MCF 10A (cell line): ENCODE measurements at regions of chr6 and their contacts with region 1.

Region 1: GRCh38 chr6:157034436-157035230 is 257.5 kb downstream of the ARID1B start:
- DNase-seq: peak; percentile 69
- H3K4me3 Mint-ChIP-seq: peak overlapping the region; percentile 72
- H3K27ac Mint-ChIP-seq: no peak overlapping the region
- H3K4me1 Mint-ChIP-seq: peaks cover 23% of the 10 kb centered on the region
- H3K27me3 Mint-ChIP-seq: no peaks in the 10 kb centered on the region
- CTCF ChIP-seq: peak; percentile 42

Region 2: GRCh38 chr6:156781861-156782631 is 252.6 kb before region 1 on chr6:
- CTCF ChIA-PET with region 1: interaction called, 3 read pairs
- POLR2A ChIA-PET with region 1: interaction called, 20 read pairs
- intact Hi-C with region 1: no loop called
- DNase-seq: peak; percentile 16
- H3K4me3 Mint-ChIP-seq: peak overlapping the region; percentile 79
- H3K27ac Mint-ChIP-seq: peak overlapping the region; percentile 97
- H3K4me1 Mint-ChIP-seq: peaks cover 13% of the 10 kb centered on the region
- H3K27me3 Mint-ChIP-seq: no peaks in the 10 kb centered on the region
- CTCF ChIP-seq: no peak

Region 3: GRCh38 chr6:157045831-157046454 is 11.3 kb after region 1 on chr6:
- CTCF ChIA-PET with region 1: interaction called, 41 read pairs
- POLR2A ChIA-PET with region 1: interaction called, 39 read pairs
- intact Hi-C with region 1: no loop called
- DNase-seq: peak; percentile 63
- H3K4me3 Mint-ChIP-seq: no peak overlapping the region
- H3K27ac Mint-ChIP-seq: peak overlapping the region; percentile 35
- H3K4me1 Mint-ChIP-seq: peaks cover 10% of the 10 kb centered on the region
- H3K27me3 Mint-ChIP-seq: no peaks in the 10 kb centered on the region
- CTCF ChIP-seq: peak; percentile 60

Region 4: GRCh38 chr6:157184202-157185020 is 149.8 kb after region 1 on chr6:
- CTCF ChIA-PET with region 1: interaction called, 4 read pairs
- POLR2A ChIA-PET with region 1: interaction called, 6 read pairs
- intact Hi-C with region 1: loop called (anchors 1 kb)
- DNase-seq: peak; percentile 57
- H3K4me3 Mint-ChIP-seq: no peak overlapping the region
- H3K27ac Mint-ChIP-seq: no peak overlapping the region
- H3K4me1 Mint-ChIP-seq: peaks cover 14% of the 10 kb centered on the region
- H3K27me3 Mint-ChIP-seq: no peaks in the 10 kb centered on the region
- CTCF ChIP-seq: peak; percentile 94